Caco-2 (cell line): ENCODE measurements at regions of chr7 and their contacts with region 1.

Region 1: GRCh38 chr7:156640257-156640948 is at the start of gene RNF32:
- DNase-seq: peak; percentile 99
- H3K4me3 ChIP-seq: peak within 1 kb of the TSS; percentile 72
- H3K4me3 Mint-ChIP-seq: peak within 1 kb of the TSS; percentile 99
- H3K27ac Mint-ChIP-seq: peak within 1 kb of the TSS; percentile 100
- H3K4me1 ChIP-seq: peaks cover 19% of the 10 kb centered on the region
- H3K4me1 Mint-ChIP-seq: peaks cover 29% of the 10 kb centered on the region
- H3K27me3 ChIP-seq: no peaks in the 10 kb centered on the region
- H3K27me3 Mint-ChIP-seq: no peaks in the 10 kb centered on the region
- CTCF ChIP-seq: no peak
- total RNA-seq, gene RNF32: 24.1 and 26.0 TPM in 2 replicates

Region 2: DNA sequence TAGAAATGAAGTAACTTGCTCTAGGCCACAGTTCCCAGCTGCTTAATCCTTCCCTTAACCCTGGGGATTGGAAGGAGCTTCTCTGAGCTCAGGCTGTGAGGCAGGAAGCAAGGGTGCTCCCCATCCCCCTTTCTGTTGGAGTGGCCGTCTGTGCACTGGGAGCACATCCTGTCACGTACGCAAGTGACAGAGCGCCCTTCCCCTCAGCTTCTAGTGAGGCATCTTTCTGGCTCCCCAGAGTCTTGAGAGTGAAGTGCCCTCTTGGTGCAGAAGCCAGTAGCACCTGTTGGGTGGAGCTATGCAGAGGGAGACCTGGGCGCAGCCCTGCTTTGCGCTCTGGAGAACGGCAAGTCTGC is 876.0 kb before region 1 on chr7:
- CTCF ChIA-PET with region 1: no interaction called
- POLR2A ChIA-PET with region 1: no interaction called
- intact Hi-C with region 1: no loop called
- DNase-seq: no peak
- H3K4me3 ChIP-seq: no peak overlapping the region
- H3K4me3 Mint-ChIP-seq: no peak overlapping the region
- H3K27ac Mint-ChIP-seq: no peak overlapping the region
- H3K4me1 ChIP-seq: no peaks in the 10 kb centered on the region
- H3K4me1 Mint-ChIP-seq: peaks cover 6% of the 10 kb centered on the region
- H3K27me3 ChIP-seq: no peaks in the 10 kb centered on the region
- H3K27me3 Mint-ChIP-seq: no peaks in the 10 kb centered on the region
- CTCF ChIP-seq: no peak

Region 3: GRCh38 chr7:155815332-155816191 is 824.8 kb before region 1 on chr7:
- CTCF ChIA-PET with region 1: no interaction called
- POLR2A ChIA-PET with region 1: no interaction called
- intact Hi-C with region 1: loop called (anchors 10 kb)
- DNase-seq: peak; percentile 76 to 89
- H3K4me3 ChIP-seq: no peak overlapping the region
- H3K4me3 Mint-ChIP-seq: peak overlapping the region; percentile 16
- H3K27ac Mint-ChIP-seq: no peak overlapping the region
- H3K4me1 ChIP-seq: peaks cover 13% of the 10 kb centered on the region; the same call in 1 of the 2 replicates
- H3K4me1 Mint-ChIP-seq: peaks cover 21% of the 10 kb centered on the region
- H3K27me3 ChIP-seq: peaks cover 3% of the 10 kb centered on the region
- H3K27me3 Mint-ChIP-seq: peaks cover 19% of the 10 kb centered on the region
- CTCF ChIP-seq: peak; percentile 86 to 97

Region 4: DNA sequence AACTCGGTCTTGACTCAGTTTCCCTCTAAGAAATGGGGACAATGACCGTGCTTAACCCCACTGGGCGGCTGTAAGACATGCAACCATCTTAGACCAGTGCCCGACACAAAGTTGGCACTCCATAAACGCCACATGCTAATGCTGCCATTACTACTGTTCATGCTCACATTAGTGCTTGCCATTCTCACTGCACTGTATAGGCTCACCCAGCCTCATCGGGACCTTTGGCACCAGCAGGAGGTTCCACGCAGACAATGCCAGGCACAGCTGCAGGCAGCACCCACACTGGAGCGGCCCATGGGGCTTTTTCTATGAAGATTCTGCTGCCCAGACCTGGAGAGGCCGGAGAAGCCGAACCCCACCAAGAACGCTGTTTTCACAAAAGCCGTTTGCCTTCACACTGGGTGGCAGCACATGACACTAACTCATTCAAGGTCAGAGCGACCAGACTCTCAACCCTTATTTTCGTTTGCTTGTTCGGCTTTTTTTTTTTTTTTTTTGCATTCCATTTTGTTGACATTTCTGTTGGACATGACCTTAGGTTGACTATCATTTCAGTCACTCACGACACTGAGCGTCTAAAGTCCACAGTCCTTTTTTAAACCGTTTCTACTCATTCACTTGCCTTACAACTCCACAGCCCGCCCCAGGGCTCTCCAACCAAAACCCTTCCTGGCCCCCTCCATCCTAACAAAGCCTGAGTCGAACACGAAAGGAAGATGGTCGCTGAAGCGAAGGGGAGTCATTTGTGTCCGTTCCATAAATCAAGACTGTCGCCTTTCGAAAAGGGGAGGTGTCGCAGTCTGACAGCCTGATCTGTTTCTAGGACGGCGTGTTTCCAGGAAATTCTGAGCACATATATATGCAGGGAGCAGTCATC is 124.3 kb before region 1 on chr7:
- CTCF ChIA-PET with region 1: no interaction called
- POLR2A ChIA-PET with region 1: no interaction called
- intact Hi-C with region 1: loop called (anchors 1 kb)
- DNase-seq: peak; percentile 55 to 70
- H3K4me3 ChIP-seq: peak overlapping the region; percentile 24
- H3K4me3 Mint-ChIP-seq: peak overlapping the region; percentile 71
- H3K27ac Mint-ChIP-seq: peak overlapping the region; percentile 55
- H3K4me1 ChIP-seq: peaks cover 10% of the 10 kb centered on the region
- H3K4me1 Mint-ChIP-seq: peaks cover 22% of the 10 kb centered on the region
- H3K27me3 ChIP-seq: no peaks in the 10 kb centered on the region
- H3K27me3 Mint-ChIP-seq: no peaks in the 10 kb centered on the region
- CTCF ChIP-seq: peak in 1 of 2 experiments; percentile 44

Region 5: DNA sequence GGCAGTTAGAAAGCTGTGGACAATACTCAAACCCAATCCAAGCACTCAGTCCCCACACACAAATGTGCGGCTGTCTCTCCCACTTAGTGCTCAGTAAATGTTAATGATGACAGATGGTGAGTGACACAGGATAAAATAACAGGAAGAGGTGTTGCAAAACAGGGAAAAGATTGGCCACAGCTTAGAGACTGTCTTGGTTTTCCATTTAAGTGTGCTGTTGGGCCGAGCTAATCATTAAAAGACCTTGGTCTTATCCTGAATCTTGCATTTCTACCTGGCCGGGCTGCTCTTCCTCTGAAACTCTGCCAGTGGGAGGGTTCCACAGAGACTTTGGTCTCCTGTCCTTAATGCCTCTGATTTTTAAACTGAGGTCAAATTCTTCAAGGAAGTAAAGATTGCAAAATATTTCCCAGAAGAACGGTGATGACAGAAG is 112.9 kb before region 1 on chr7:
- CTCF ChIA-PET with region 1: no interaction called
- POLR2A ChIA-PET with region 1: interaction called, 3 read pairs
- intact Hi-C with region 1: loop called (anchors 2 kb)
- DNase-seq: peak; percentile 68 to 82
- H3K4me3 ChIP-seq: no peak overlapping the region
- H3K4me3 Mint-ChIP-seq: no peak overlapping the region
- H3K27ac Mint-ChIP-seq: peak overlapping the region; percentile 45
- H3K4me1 ChIP-seq: peaks cover 39% of the 10 kb centered on the region
- H3K4me1 Mint-ChIP-seq: peaks cover 18% of the 10 kb centered on the region
- H3K27me3 ChIP-seq: no peaks in the 10 kb centered on the region
- H3K27me3 Mint-ChIP-seq: no peaks in the 10 kb centered on the region
- CTCF ChIP-seq: no peak

Region 6: GRCh38 chr7:156560075-156560474 is 80.3 kb before region 1 on chr7:
- CTCF ChIA-PET with region 1: no interaction called
- POLR2A ChIA-PET with region 1: no interaction called
- intact Hi-C with region 1: loop called (anchors 1 kb)
- DNase-seq: peak; percentile 40 to 44
- H3K4me3 ChIP-seq: no peak overlapping the region
- H3K4me3 Mint-ChIP-seq: no peak overlapping the region
- H3K27ac Mint-ChIP-seq: no peak overlapping the region
- H3K4me1 ChIP-seq: no peaks in the 10 kb centered on the region
- H3K4me1 Mint-ChIP-seq: no peaks in the 10 kb centered on the region
- H3K27me3 ChIP-seq: no peaks in the 10 kb centered on the region
- H3K27me3 Mint-ChIP-seq: no peaks in the 10 kb centered on the region
- CTCF ChIP-seq: peak; percentile 52 to 59

Region 7: DNA sequence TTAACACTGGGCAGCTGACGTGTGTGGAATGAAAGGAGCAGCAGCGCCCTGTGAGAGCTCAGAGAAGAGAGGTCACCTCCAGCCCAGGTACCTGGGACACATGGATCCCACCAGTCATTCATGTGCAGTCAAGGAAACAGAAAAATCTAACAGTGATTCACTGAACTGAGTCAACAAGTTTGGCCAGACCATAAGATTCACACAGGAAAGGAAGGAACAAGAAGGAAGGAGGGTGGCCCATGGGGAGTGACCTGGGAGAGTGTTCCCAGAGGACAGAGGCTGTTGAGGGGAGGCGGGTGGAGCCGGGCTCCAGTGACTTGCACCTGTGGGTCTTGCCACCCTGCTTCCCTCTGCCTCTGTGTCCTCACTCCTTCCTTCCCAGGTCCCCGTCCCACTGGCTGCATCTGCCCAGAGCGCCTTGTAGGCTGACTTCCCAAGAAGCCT is 27.8 kb after region 1 on chr7:
- CTCF ChIA-PET with region 1: interaction called, 4 read pairs
- POLR2A ChIA-PET with region 1: interaction called, 7 read pairs
- intact Hi-C with region 1: loop called (anchors 1 kb)
- DNase-seq: peak; percentile 59 to 78
- H3K4me3 ChIP-seq: no peak overlapping the region
- H3K4me3 Mint-ChIP-seq: peak overlapping the region; percentile 45
- H3K27ac Mint-ChIP-seq: peak overlapping the region; percentile 88
- H3K4me1 ChIP-seq: peaks cover 55% of the 10 kb centered on the region
- H3K4me1 Mint-ChIP-seq: peaks cover 47% of the 10 kb centered on the region
- H3K27me3 ChIP-seq: no peaks in the 10 kb centered on the region
- H3K27me3 Mint-ChIP-seq: no peaks in the 10 kb centered on the region
- CTCF ChIP-seq: no peak